ENCODE measurements at regions of chr2 and their contacts with region 1.

Region 1: DNA sequence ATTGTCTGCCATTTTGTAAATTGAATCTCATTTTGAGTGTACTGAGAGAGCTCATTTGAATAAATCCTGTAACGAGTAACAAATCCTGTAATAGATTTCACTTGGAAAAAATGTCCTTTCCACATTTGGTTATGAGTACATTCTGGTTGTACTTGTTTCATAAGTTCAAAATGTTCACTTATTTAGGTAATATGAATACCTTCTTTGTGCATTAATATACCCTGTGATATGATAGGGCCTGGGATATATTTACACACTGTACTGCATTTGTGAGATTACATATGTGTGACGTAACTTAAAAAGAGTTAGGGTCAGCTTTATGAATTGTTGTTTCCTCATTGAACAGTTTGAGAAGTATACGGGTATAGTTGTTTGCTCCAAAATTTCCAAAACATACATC is 16.1 kb downstream of the AGFG1 start:
- DNase-seq: no peak
- H3K4me3 Mint-ChIP-seq: no peak overlapping the region
- H3K27ac Mint-ChIP-seq: peak overlapping the region; percentile 73
- H3K4me1 Mint-ChIP-seq: peaks cover 71% of the 10 kb centered on the region
- H3K27me3 Mint-ChIP-seq: no peaks in the 10 kb centered on the region

Region 2: GRCh38 chr2:227471924-227472264 is 16.2 kb before region 1 on chr2 and contains the start of gene AGFG1:
- CTCF ChIA-PET with region 1: interaction called, 3 read pairs
- intact Hi-C with region 1: loop called (anchors 2 kb)
- DNase-seq: peak; percentile 89
- H3K4me3 Mint-ChIP-seq: peak within 1 kb of the TSS; percentile 93
- H3K27ac Mint-ChIP-seq: peak within 1 kb of the TSS; percentile 93
- H3K4me1 Mint-ChIP-seq: peaks cover 53% of the 10 kb centered on the region
- H3K27me3 Mint-ChIP-seq: no peaks in the 10 kb centered on the region
- total RNA-seq, gene AGFG1: 153 to 157 TPM

Region 3: DNA sequence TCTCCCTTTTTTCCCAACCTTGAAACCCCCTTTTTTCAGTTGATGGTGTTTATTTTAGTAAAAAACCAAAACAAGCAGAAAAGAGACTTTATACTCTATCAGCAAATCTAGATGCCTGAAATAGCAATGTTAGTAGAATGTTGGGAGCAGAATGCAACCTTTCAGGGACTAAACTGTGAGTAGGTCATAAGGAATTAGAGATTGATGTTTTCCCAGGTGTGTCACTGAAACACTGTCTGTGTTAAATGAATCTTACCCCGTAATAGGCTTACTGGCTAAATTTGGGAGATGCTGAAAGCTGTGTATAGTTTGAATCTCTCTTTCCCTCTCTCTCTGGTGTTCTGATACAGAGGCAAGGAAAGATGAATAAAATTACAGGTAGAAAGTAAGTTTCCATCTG is 27.7 kb after region 1 on chr2:
- CTCF ChIA-PET with region 1: no interaction called
- intact Hi-C with region 1: loop called (anchors 2 kb)
- DNase-seq: no peak
- H3K4me3 Mint-ChIP-seq: no peak overlapping the region
- H3K27ac Mint-ChIP-seq: no peak overlapping the region
- H3K4me1 Mint-ChIP-seq: peaks cover 69% of the 10 kb centered on the region
- H3K27me3 Mint-ChIP-seq: no peaks in the 10 kb centered on the region

Region 4: DNA sequence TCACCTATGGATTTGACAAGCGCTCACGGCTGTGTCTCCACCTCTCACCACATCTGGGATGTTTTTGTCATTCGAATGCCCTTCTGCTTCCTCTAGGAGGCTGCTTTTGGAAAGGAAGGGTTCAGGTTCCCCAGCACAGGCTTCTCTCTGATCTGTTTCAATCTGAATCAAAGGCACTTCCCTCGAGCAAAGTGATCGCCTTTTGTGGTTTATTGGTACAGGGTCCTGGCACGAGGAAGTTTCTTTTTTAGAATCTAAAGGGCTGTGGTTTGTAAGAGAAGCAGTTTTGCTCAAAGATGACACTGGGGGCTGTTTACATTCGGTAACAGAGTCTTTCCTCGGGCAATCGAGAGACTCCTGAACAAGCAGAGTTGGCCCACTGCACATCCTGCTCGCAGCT is 528.4 kb after region 1 on chr2:
- CTCF ChIA-PET with region 1: no interaction called
- intact Hi-C with region 1: no loop called
- DNase-seq: no peak
- H3K4me3 Mint-ChIP-seq: no peak overlapping the region
- H3K27ac Mint-ChIP-seq: no peak overlapping the region
- H3K4me1 Mint-ChIP-seq: no peaks in the 10 kb centered on the region
- H3K27me3 Mint-ChIP-seq: no peaks in the 10 kb centered on the region